GM10248 (cell line): ENCODE measurements at regions of chr20 and their contacts with region 1.

Region 1: GRCh38 chr20:4771004-4771403 is 49.3 kb downstream of the PRND start:
- DNase-seq: no peak
- CTCF ChIP-seq: no peak

Region 2: GRCh38 chr20:4645646-4646045 is 125.4 kb before region 1 on chr20:
- CTCF ChIA-PET with region 1: no interaction called
- POLR2A ChIA-PET with region 1: no interaction called
- DNase-seq: no peak
- CTCF ChIP-seq: no peak

Region 3: DNA sequence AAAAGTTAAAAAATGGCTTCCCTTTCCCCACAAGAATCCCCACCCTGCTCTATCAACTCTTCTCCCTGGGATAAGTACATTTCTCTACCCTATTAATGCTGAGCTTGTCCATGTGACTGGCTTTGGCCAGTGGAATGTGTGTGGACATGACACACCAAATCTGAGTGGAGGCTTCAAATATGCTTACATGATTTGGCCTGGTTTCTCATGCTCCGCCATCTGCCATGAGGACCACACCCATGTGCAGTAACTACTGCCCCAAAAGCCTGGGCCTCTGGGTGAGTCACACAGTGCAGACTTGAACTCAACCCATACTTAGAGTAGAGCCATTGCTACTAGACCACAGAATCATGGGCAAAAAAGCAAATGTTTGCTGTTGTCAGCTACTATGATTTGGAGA is 16.1 kb after region 1 on chr20:
- CTCF ChIA-PET with region 1: interaction called, 10 read pairs
- POLR2A ChIA-PET with region 1: no interaction called
- DNase-seq: no peak
- CTCF ChIP-seq: no peak